AG04450 (cell line): ENCODE measurements at regions of chr12 and their contacts with region 1.

Region 1: DNA sequence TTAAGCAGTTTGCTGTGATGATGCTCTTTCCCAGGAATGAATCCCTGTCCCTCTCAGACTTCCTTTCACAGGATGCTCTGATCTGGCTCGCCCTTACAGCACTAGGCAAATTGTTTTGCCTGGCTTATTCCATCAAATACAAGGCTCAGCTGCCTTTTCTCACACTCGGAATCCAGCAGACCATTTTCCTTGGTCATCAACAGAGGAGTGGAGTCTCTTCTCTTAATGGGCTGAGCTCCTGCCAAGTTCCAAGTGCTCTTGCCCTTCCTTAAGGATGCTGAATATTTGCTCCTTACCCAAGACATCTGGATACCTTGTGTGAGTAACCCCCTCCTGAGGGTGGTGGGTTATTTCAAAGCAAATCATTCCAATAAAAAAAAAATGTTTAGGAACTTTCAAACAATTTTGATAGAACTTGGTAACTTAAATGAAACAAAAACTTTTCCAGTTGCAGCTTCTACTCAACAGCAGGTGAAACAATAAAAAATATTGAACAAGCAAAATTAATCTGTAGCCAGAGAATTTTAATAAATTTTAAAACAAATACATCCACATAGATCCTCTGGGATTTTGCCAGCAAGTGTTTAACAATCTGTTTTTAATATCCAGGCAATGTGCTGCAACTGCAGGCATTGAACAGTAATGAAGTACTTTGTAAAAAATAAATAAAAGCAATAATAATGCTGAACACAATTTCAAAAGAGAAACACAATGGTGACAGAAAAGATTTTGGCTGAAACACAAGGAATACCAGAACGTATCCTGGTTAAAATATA is 264.0 kb upstream of the FAR2 start:
- DNase-seq: no peak
- H3K4me3 ChIP-seq: no peak overlapping the region
- H3K27ac ChIP-seq: no peak overlapping the region
- H3K27me3 ChIP-seq: no peaks in the 10 kb centered on the region
- CTCF ChIP-seq: no peak

Region 2: GRCh38 chr12:28872654-28873268 is 12.3 kb before region 1 on chr12:
- CTCF ChIA-PET with region 1: interaction called, 17 read pairs
- POLR2A ChIA-PET with region 1: no interaction called
- DNase-seq: peak; percentile 33
- H3K4me3 ChIP-seq: no peak overlapping the region
- H3K27ac ChIP-seq: no peak overlapping the region
- H3K27me3 ChIP-seq: no peaks in the 10 kb centered on the region
- CTCF ChIP-seq: peak; percentile 80